Vagina (tissue), 2 donors: ENCODE measurements at regions of chr17 and their contacts with region 1.

Region 1: DNA sequence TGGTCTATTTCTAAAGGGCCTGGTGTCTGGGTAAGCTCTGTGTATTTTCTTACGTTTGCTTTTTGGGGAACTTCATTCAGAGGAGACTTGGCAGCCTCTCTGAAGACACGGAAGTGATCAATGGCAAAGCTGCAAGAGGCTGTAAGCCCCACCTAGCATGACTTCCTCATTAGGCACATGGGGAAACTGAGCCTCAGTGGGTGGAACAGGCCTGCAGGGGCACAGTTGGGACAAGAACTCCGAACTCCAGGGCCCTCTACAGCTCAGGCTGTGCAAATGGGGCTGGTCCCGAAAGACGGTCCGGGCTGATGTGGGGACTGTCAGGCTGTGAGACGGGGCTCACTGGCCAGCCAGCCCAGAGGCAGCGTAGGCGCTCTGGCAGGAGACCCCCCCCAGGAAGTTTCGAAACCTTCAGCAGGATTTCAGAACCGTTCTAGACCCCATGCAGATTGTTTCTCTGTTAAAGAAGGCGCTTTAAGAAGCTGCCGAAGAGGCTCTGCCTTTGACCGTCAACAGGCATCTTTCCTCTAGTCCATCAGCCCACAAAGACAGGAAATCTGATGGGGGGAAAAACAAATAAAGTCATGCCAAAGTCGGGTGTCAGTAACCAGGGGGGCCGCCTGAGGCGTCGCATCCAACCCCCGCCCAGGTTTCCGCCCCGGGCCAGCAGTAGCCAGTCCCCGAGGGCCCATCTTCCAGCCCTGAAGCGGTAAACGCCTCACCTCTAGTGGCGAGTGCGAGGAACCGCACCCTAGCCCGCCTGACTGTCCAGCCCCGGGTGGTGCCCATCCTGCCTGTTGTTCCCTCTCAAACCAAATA is 79.8 kb upstream of the TBC1D3K start:
- DNase-seq: no peak
- H3K4me3 ChIP-seq: peak overlapping the region in 1 of 2 donors; percentile 0
- H3K27ac ChIP-seq: no peak overlapping the region
- H3K4me1 ChIP-seq: no peaks in the 10 kb centered on the region
- H3K27me3 ChIP-seq: no peaks in the 10 kb centered on the region
- CTCF ChIP-seq: peak in 2 of 3 experiments; percentile 27 to 50
- POLR2A ChIP-seq: no peak

Region 2: GRCh38 chr17:39099663-39100286 is 1255.4 kb after region 1 on chr17:
- intact Hi-C with region 1: loop called (anchors 5 kb)
- DNase-seq: no peak
- H3K4me3 ChIP-seq: no peak overlapping the region
- H3K27ac ChIP-seq: peak overlapping the region; percentile 45
- H3K4me1 ChIP-seq: peaks cover 31% of the 10 kb centered on the region
- H3K27me3 ChIP-seq: no peaks in the 10 kb centered on the region
- CTCF ChIP-seq: no peak
- POLR2A ChIP-seq: no peak